Activated CD4-positive, alpha-beta memory T cell treated with anti-CD3 and anti-CD28 coated beads for 36 hours (primary cell): ENCODE measurements at regions of chr9 and their contacts with region 1.

Region 1: GRCh38 chr9:134067904-134068743 is at the start of gene BRD3:
- DNase-seq: peak; percentile 85
- H3K4me3 Mint-ChIP-seq: peak within 1 kb of the TSS; percentile 87
- H3K27ac Mint-ChIP-seq: peak within 1 kb of the TSS; percentile 80
- H3K4me1 Mint-ChIP-seq: peaks cover 24% of the 10 kb centered on the region
- H3K27me3 Mint-ChIP-seq: peaks cover 13% of the 10 kb centered on the region
- total RNA-seq, gene BRD3: 29.2 to 30.0 TPM

Region 2: GRCh38 chr9:133768859-133769425 is 299.2 kb before region 1 on chr9:
- CTCF ChIA-PET with region 1: no interaction called
- POLR2A ChIA-PET with region 1: no interaction called
- intact Hi-C with region 1: no loop called
- DNase-seq: peak; percentile 9
- H3K4me3 Mint-ChIP-seq: no peak overlapping the region
- H3K27ac Mint-ChIP-seq: no peak overlapping the region
- H3K4me1 Mint-ChIP-seq: no peaks in the 10 kb centered on the region
- H3K27me3 Mint-ChIP-seq: no peaks in the 10 kb centered on the region

Region 3: DNA sequence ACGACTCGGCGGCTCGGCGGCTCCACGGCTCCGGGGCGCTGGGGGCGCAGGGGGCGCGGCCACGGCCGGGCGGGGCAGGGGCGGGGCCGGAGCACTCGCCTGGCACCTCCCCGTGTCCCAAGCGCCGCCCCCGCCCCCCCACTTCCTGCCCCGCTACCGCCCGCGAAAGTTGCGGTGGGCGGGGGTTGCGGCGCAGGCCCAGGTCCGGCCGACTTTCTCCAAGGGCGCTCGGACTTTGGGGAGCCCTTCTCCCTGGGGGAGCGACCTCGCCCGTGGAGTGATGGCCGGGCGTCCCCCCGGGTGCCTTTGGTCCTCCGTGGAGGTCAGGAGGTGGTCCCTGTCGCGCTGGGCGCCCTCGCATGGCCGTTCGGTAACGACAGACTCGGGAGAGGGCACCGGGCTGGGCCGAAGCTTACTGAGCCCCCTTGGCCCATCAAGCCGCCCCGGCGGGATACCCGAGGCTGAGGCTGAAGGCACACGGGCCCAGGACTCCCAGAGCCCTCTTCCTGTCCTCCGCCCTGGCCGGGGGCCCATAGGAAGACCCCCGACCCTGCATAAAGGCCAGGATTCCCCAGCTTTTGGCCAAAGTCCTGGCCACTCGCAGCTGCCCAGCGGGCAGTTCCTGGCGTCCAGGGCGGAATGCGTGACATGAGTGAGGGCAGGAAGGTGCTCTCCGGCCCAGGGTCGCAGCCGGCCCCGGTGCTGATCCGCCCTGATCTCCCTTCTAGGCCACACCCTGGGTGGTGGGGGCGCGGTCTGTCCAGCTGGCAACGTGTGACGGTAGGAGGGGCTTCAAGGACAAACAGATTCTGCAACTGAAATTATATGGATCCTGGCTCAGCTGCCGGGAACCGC is 75.1 kb before region 1 on chr9:
- CTCF ChIA-PET with region 1: no interaction called
- POLR2A ChIA-PET with region 1: no interaction called
- intact Hi-C with region 1: loop called (anchors 5 kb)
- DNase-seq: peak; percentile 78
- H3K4me3 Mint-ChIP-seq: peak overlapping the region; percentile 69
- H3K27ac Mint-ChIP-seq: no peak overlapping the region
- H3K4me1 Mint-ChIP-seq: peaks cover 1% of the 10 kb centered on the region
- H3K27me3 Mint-ChIP-seq: peaks cover 12% of the 10 kb centered on the region

Region 4: DNA sequence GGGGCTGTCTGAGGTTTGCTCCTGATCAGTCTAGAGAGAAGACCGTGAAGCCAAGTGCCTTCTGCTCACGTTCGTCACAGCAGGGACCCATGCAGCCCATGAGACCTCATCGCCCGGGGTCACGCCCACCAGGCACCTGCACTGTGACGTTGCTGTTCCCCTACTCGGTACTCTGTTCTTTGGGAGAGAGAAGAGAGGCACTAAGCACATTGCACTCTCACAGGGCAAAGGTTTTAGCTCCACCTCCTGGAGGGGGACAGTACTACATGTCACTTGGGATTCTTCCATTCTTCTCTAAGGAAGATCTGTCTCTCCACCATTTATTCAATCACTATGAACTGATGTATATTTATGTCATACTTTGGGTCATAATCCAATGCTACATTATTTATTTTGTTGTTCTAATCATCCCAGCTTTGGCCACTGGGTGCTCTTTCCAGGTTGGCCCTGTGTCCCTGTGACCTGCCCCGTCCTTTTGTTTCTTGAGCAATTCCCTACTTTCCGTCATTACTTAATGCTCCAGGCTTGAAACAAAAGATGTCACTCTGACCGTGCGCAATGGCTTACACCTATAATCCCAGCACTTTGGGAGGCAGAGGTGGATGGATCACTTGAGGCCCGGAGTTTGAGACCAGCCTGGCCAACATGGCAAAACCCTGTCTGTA is 31.1 kb after region 1 on chr9:
- CTCF ChIA-PET with region 1: interaction called, 3 read pairs
- POLR2A ChIA-PET with region 1: no interaction called
- intact Hi-C with region 1: loop called (anchors 2 kb)
- DNase-seq: peak; percentile 61
- H3K4me3 Mint-ChIP-seq: no peak overlapping the region
- H3K27ac Mint-ChIP-seq: no peak overlapping the region
- H3K4me1 Mint-ChIP-seq: no peaks in the 10 kb centered on the region
- H3K27me3 Mint-ChIP-seq: peaks cover 5% of the 10 kb centered on the region

Region 5: DNA sequence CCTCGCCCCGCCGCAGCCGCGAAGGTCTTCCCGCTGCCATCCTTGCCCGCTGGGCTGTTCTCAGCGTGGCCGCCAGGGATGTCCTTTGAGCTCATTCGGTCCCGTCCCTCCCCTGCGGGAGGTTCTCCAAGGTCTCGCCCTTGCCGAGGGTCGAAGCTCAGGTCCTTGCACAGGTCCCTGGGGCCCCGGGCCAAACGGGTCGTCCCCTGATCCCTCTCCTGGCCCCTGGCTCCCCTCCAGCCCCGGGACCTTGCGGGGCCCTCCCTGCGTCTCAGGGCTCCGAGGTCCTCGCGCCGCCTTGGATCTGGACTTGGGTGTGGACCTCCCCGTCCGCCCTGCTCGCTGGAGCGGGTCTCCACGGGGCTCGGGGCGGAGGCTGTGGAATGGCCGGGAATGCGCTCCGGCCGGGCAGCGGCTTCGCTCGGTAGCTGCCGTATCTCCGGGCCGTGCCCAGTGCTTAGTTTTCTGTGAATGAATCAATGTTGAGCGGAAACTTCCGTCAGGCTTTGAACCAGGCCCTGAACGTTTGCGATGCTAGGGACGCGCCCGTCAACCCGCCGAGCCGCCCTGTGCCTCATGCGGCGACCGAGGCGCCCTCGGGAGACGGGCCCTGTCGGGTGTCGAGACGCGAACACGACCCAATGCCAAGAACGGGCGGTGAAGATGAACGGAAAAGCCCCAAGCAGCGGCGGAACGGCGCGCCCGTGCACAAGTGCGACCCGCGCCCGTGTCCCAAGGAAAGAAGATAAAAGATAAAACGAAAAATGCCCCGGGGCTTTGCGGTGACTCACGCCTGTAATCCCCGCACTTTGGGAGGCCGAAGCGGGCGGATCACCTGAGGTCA is 95.5 kb after region 1 on chr9:
- CTCF ChIA-PET with region 1: interaction called, 3 read pairs
- POLR2A ChIA-PET with region 1: interaction called, 4 read pairs
- intact Hi-C with region 1: loop called (anchors 1 kb)
- DNase-seq: peak; percentile 78
- H3K4me3 Mint-ChIP-seq: no peak overlapping the region
- H3K27ac Mint-ChIP-seq: no peak overlapping the region
- H3K4me1 Mint-ChIP-seq: peaks cover 19% of the 10 kb centered on the region
- H3K27me3 Mint-ChIP-seq: no peaks in the 10 kb centered on the region